ENCODE measurements at regions of chr11 and their contacts with region 1.

Region 1: GRCh38 chr11:103183981-103184611 is 74.9 kb downstream of the DYNC2H1 start:
- DNase-seq: no peak
- H3K4me3 ChIP-seq: no peak overlapping the region
- H3K27ac ChIP-seq: no peak overlapping the region
- H3K4me1 ChIP-seq: no peaks in the 10 kb centered on the region
- CTCF ChIP-seq: no peak

Region 2: GRCh38 chr11:103202048-103202651 is 18.1 kb after region 1 on chr11:
- CTCF ChIA-PET with region 1: no interaction called
- POLR2A ChIA-PET with region 1: no interaction called
- intact Hi-C with region 1: loop called (anchors 1 kb)
- DNase-seq: peak; percentile 23
- H3K4me3 ChIP-seq: no peak overlapping the region
- H3K27ac ChIP-seq: no peak overlapping the region
- H3K4me1 ChIP-seq: no peaks in the 10 kb centered on the region
- CTCF ChIP-seq: peak; percentile 83

Measured in OCI-LY7 (cell line).